Dorsolateral prefrontal cortex (tissue), 120 donors: ENCODE measurements at regions of chr1 and their contacts with region 1.

Region 1: DNA sequence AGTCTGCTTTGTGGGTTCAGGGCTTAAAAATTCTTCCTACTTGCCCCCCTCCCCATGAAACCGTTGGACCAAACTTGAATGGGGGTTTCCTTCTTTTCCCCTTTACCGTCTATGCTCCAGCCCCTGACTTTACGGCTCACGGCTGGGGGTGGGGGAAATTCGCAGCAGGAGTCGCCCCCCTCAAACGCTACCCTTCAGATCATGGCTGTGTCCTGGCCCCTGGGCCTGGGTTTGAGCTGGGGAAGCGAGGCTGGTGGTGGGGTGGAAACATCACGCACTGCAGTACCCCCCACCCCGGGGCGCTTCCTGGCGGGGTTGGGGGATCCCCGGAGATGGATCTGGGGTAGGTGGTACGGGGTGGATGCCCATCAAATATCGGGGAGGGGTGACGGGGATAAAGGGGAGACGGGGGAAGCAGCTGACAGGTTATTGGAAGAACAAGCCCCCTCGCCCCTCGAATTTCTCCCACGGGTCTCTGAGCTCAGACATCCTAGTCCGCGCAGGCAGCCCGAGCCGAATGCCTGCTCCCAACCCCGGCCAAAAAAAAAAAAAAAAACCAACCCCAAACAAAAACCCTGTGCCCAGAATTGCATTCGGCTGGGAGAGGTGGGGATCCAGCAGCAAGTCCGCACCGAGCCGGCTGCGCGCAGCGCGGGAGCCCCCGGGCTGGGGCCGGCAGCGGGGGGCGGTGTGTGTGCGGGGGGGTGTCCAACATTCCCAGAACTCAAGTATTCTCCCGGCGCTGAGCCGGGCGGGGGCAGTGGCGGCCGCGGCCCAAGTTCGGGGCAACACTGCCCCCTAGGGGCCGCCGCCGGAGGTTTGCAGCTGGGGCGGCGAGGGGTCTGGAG is 59.0 kb upstream of the ACOT11 start:
- DNase-seq: peak; percentile 59 to 85 (median 76)
- H3K4me3 ChIP-seq: peak overlapping the region; percentile 39 to 80 (median 65)
- H3K27ac ChIP-seq: peak overlapping the region in 58 of 59 donors; percentile 54 to 98 (median 90)
- H3K27me3 ChIP-seq: no peaks in the 10 kb centered on the region
- CTCF ChIP-seq: peak; percentile 86 to 100 (median 98)

Region 2: GRCh38 chr1:54016313-54017262 is 472.4 kb before region 1 on chr1:
- intact Hi-C with region 1: no loop called
- DNase-seq: no peak
- H3K4me3 ChIP-seq: no peak overlapping the region
- H3K27ac ChIP-seq: no peak overlapping the region
- H3K27me3 ChIP-seq: peaks cover 0 to 9% (median 0%) of the 10 kb centered on the region in 45 donors
- CTCF ChIP-seq: no peak

Region 3: DNA sequence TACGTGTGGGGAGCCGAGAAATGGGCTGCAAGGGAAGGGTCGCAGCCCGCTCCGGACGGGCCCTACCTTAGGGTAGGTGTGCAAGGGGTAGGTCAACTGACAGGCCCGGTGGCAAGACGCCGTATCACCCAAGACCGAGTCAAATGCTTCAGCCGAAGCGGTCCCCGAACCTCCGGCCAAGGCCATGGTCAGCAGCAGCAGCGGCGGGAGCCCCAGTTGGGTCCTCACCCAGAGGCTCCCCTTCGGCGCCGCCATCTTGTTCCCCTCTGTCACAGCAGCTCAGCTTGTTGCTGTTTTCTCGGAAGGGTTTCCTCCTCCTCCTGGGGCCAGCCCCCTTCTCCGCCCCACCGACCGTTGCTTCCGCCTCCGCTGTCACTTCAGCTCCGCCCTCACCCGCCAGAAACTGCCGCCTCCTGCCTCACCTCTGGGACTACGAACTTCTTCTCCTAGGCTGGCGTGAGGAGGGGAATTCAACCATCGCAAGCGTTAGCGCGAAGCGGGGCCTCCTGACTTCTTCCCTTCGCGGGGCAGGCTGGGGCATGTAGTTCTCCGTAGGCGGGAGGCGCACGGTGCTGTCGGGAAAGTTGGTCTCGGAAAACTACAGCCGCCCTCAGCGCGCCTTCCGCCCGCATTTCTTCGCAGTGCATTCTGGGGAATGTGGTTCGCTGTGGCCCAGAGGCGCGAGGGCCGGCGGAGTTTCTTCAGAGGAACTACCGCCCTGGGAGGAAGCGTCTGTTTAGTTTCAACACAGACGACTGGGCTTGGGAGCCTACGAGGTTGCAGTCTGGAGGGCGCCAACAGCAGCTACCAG is 435.9 kb before region 1 on chr1 and contains the starts of genes TCEANC2 and TMEM59:
- intact Hi-C with region 1: loop called in 1 of 2 experiments (anchors 5 kb)
- DNase-seq: peak; percentile 94 to 99 (median 98)
- H3K4me3 ChIP-seq: peak within 1 kb of the TSS; percentile 71 to 100 (median 95)
- H3K27ac ChIP-seq: peak within 1 kb of the TSS; percentile 82 to 99 (median 96)
- H3K27me3 ChIP-seq: no peaks in the 10 kb centered on the region
- CTCF ChIP-seq: peak in 30 of 56 donors; percentile 4 to 57 (median 29)
- total RNA-seq, gene TCEANC2: 5.2 to 16.1 (median 8.6) TPM
- total RNA-seq, gene TMEM59: 155 to 435 (median 269) TPM

Region 4: GRCh38 chr1:54121482-54122134 is 367.4 kb before region 1 on chr1:
- intact Hi-C with region 1: loop called (anchors 1 to 2 kb)
- DNase-seq: peak; percentile 71 to 89 (median 84)
- H3K4me3 ChIP-seq: peak overlapping the region in 57 of 59 donors; percentile 8 to 64 (median 43)
- H3K27ac ChIP-seq: peak overlapping the region in 4 of 59 donors; percentile 2 to 49 (median 22)
- H3K27me3 ChIP-seq: no peaks in the 10 kb centered on the region
- CTCF ChIP-seq: peak; percentile 33 to 90 (median 78)

Region 5: DNA sequence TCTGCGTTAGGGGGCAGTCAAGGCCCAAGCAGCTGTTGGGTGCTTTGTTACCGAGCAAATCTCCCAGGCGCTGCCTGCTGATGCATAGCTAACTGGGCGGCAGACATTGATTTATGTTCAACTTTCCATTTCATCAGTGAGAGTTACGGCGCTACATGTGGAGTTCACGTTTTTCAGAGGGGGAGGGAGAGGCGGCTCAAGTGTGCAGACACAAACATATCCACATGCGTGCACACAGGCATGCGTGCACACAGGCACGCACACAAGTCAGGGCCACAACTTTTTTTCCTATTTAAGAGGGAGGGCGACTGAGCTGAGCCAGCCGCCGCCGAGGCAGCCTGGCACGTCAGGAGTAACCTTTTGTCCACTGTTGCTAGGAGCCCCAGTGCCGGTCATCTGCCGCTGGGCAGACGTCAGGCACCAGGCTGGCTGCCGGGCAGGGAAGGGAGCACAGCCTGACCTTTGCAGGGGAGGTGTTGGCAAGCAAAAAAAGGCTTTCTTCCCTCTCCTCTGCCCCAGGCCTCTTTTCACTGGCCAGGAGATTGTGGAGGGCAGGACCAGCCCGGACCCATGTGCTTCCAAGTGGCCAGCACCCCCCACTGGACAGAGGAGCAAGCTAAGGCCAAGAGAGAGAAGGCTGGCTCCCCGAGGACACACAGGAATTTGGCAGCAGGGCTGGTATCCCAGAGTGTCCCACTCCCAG is 215.8 kb before region 1 on chr1:
- intact Hi-C with region 1: loop called (anchors 2 to 5 kb)
- DNase-seq: peak; percentile 54 to 89 (median 80)
- H3K4me3 ChIP-seq: peak overlapping the region in 52 of 59 donors; percentile 1 to 51 (median 30)
- H3K27ac ChIP-seq: peak overlapping the region; percentile 30 to 92 (median 81)
- H3K27me3 ChIP-seq: no peaks in the 10 kb centered on the region
- CTCF ChIP-seq: peak in 50 of 56 donors; percentile 0 to 82 (median 64)

Region 6: GRCh38 chr1:54406339-54407153 is 82.5 kb before region 1 on chr1 and contains the start of gene SSBP3:
- intact Hi-C with region 1: loop called (anchors 1 kb)
- DNase-seq: peak; percentile 84 to 99 (median 92)
- H3K4me3 ChIP-seq: peak within 1 kb of the TSS; percentile 58 to 93 (median 82)
- H3K27ac ChIP-seq: peak within 1 kb of the TSS in 57 of 59 donors; percentile 36 to 98 (median 89)
- H3K27me3 ChIP-seq: no peaks in the 10 kb centered on the region
- CTCF ChIP-seq: peak in 24 of 56 donors; percentile 12 to 46 (median 27)
- total RNA-seq, gene SSBP3: 90.9 to 247 (median 178) TPM